ENCODE measurements at regions of chr14 and their contacts with region 1.

Region 1: DNA sequence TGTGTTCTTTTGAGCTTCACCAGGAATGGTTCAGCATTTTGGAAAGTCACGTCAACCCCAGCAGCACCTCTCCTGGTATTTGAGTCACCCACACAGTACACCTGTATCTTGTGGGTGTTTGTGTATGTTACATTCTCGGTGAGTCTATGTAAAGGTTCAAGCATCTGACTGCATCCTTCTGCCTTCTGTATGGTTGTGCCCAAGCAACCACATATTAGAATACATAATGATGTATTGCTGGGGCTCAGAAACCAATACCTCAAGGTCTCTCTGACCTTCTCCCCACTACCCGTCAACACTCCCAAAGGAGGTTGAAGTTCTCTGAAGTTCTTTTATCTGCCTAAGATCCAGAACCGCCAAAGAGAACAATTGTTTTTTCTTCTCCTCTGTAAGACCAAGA is 9.2 kb upstream of the TMEM229B start:
- DNase-seq: no peak
- H3K4me3 ChIP-seq: no peak overlapping the region
- H3K27ac ChIP-seq: no peak overlapping the region
- H3K4me1 ChIP-seq: no peaks in the 10 kb centered on the region
- H3K27me3 ChIP-seq: no peaks in the 10 kb centered on the region
- CTCF ChIP-seq: no peak
- POLR2A ChIP-seq: no peak

Region 2: GRCh38 chr14:67467179-67468080 is 30.3 kb before region 1 on chr14:
- CTCF ChIA-PET with region 1: no interaction called
- POLR2A ChIA-PET with region 1: no interaction called
- dilution Hi-C with region 1: no loop called
- intact Hi-C with region 1: loop called (anchors 1 kb)
- DNase-seq: no peak
- H3K4me3 ChIP-seq: no peak overlapping the region
- H3K27ac ChIP-seq: no peak overlapping the region
- H3K4me1 ChIP-seq: no peaks in the 10 kb centered on the region
- H3K27me3 ChIP-seq: peaks cover 5 to 6% of the 10 kb centered on the region in 2 experiments
- CTCF ChIP-seq: peak in 1 of 2 donors; percentile 23
- POLR2A ChIP-seq: no peak

Region 3: GRCh38 chr14:67551940-67552339 is 54.2 kb after region 1 on chr14:
- CTCF ChIA-PET with region 1: no interaction called
- POLR2A ChIA-PET with region 1: no interaction called
- dilution Hi-C with region 1: no loop called
- intact Hi-C with region 1: no loop called
- DNase-seq: no peak
- H3K4me3 ChIP-seq: no peak overlapping the region
- H3K27ac ChIP-seq: no peak overlapping the region
- H3K4me1 ChIP-seq: no peaks in the 10 kb centered on the region
- H3K27me3 ChIP-seq: peaks cover 0 to 13% of the 10 kb centered on the region in 2 experiments
- CTCF ChIP-seq: no peak
- POLR2A ChIP-seq: no peak